ENCODE measurements at regions of chr4 and their contacts with region 1.

Region 1: DNA sequence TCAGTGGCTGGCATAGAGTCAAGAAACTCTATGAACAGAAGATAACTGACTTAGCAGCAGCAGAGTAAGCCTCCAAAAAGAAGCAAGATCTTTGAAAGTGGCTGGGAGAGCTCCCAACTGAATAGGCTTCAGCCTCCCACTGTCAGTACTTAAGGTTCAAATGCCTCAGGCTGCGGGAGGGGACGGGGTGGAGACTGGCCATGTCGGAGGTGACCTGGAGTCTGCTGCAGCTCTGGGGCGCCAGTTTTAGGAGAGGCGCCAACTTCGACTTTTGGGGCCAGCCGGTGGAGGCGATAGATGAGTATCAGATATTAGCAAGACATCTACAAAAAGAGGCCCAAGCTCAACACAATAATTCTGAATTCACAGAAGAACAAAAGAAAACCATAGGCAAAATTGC is 67.3 kb downstream of the TMEM144 start:
- DNase-seq: no peak
- H3K4me3 ChIP-seq: no peak overlapping the region
- CTCF ChIP-seq: no peak

Region 2: GRCh38 chr4:158211222-158211621 is 66.3 kb before region 1 on chr4:
- CTCF ChIA-PET with region 1: no interaction called
- POLR2A ChIA-PET with region 1: no interaction called
- DNase-seq: no peak
- H3K4me3 ChIP-seq: no peak overlapping the region
- CTCF ChIP-seq: no peak

Region 3: GRCh38 chr4:158259955-158260575 is 17.5 kb before region 1 on chr4:
- CTCF ChIA-PET with region 1: interaction called, 23 read pairs
- POLR2A ChIA-PET with region 1: no interaction called
- DNase-seq: no peak
- H3K4me3 ChIP-seq: no peak overlapping the region
- CTCF ChIP-seq: peak; percentile 5

Region 4: GRCh38 chr4:158395889-158396288 is 118.3 kb after region 1 on chr4:
- CTCF ChIA-PET with region 1: no interaction called
- POLR2A ChIA-PET with region 1: no interaction called
- DNase-seq: no peak
- H3K4me3 ChIP-seq: no peak overlapping the region
- CTCF ChIP-seq: no peak

Region 5: GRCh38 chr4:158617956-158618355 is 340.4 kb after region 1 on chr4:
- CTCF ChIA-PET with region 1: no interaction called
- POLR2A ChIA-PET with region 1: no interaction called
- DNase-seq: no peak
- H3K4me3 ChIP-seq: no peak overlapping the region
- CTCF ChIP-seq: no peak